Naive thymus-derived CD4-positive, alpha-beta T cell (primary cell): ENCODE measurements at regions of chr1 and their contacts with region 1.

Region 1: DNA sequence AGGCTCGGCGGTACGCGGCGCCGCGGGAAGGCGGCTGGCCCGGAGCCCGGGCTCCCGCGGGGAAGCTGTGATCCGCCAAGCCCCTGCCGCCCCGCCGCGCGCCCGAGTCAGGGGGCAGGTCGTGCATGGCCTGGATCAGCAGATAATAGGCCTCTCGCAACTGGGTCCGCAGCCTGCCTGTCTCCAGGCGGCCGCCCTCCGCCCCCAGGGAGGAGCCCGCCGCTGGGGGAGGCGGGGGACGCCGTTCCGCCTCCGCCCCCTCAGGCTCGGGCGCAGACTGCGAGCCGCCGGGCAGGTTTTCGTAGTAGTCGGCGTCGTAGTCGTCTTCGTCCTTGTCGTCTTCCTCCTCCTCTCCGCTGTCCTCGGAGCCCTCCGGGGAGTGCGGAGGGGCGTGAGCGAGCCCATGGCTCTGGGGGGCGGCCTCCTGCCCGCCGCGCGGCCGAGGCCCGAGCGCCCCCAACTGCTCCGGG is at the start of gene SYDE2:
- DNase-seq: peak; percentile 72 to 91 (median 89)
- ATAC-seq: peak; percentile 90
- H3K4me3 ChIP-seq: peak within 1 kb of the TSS; percentile 84
- H3K4me3 Mint-ChIP-seq: peak within 1 kb of the TSS; percentile 86 to 100 (median 98)
- H3K27ac ChIP-seq: peak within 1 kb of the TSS; percentile 96
- H3K27ac Mint-ChIP-seq: peak within 1 kb of the TSS; percentile 88 to 100 (median 99)
- H3K4me1 ChIP-seq: peaks cover 7 to 11% of the 10 kb centered on the region in 2 donors
- H3K4me1 Mint-ChIP-seq: peaks cover 15 to 61% (median 53%) of the 10 kb centered on the region in 7 donors
- H3K27me3 ChIP-seq: no peaks in the 10 kb centered on the region
- H3K27me3 Mint-ChIP-seq: peaks cover 0 to 46% (median 0%) of the 10 kb centered on the region in 5 donors
- total RNA-seq, gene SYDE2: 1.2 to 9.1 (median 8.4) TPM

Region 2: GRCh38 chr1:84433258-84434080 is 767.4 kb before region 1 on chr1:
- CTCF ChIA-PET with region 1: no interaction called
- POLR2A ChIA-PET with region 1: no interaction called
- intact Hi-C with region 1: loop called in 1 of 2 experiments (anchors 2 kb)
- DNase-seq: peak in 7 of 9 donors; percentile 71 to 85 (median 79)
- ATAC-seq: peak; percentile 92
- H3K4me3 ChIP-seq: peak overlapping the region; percentile 34
- H3K4me3 Mint-ChIP-seq: peak overlapping the region in 9 of 10 donors; percentile 29 to 82 (median 77)
- H3K27ac ChIP-seq: peak overlapping the region; percentile 73
- H3K27ac Mint-ChIP-seq: peak overlapping the region in 2 of 9 donors; percentile 85 to 90
- H3K4me1 ChIP-seq: peaks cover 23 to 41% of the 10 kb centered on the region in 2 donors
- H3K4me1 Mint-ChIP-seq: peaks cover 0 to 12% (median 9%) of the 10 kb centered on the region in 7 donors
- H3K27me3 ChIP-seq: no peaks in the 10 kb centered on the region
- H3K27me3 Mint-ChIP-seq: no peaks in the 10 kb centered on the region

Region 3: DNA sequence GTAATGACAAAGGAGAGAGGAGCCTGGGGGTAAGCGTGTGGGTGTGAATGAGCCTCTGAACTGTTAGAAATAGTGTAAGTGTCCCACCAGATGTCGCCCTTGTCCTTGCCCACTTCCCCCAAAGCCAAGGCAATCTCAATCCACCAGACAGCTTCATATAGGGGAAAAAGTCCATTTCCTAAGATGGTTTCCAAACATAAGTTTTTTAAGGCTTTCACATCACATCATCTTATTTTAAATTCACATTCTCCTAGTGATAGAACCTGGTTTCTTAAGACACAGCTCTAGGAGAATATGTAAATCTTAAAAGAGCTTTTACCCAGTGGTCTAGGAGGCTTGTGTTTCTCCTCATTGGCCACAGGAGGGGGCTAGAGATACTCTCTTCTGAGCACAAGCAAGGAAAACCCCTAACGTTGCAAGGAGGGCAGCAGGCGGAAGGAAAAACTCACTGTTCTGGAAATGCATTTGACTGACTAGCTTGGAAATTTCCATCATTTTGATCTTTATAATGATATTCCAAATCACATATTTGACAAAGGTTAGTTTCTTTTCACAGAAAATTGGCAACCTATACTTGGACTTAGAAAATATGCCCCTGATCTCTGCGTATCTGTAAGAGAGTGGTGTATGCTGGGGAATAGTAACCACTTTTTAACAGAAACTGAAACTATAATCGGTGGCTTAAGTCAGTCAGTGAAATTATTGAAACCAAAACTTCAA is 256.0 kb before region 1 on chr1:
- CTCF ChIA-PET with region 1: interaction called, 9 read pairs
- POLR2A ChIA-PET with region 1: interaction called, 5 read pairs
- intact Hi-C with region 1: loop called (anchors 1 kb)
- DNase-seq: peak; percentile 20 to 94 (median 90)
- ATAC-seq: peak; percentile 98
- H3K4me3 ChIP-seq: peak overlapping the region; percentile 63
- H3K4me3 Mint-ChIP-seq: peak overlapping the region; percentile 72 to 93 (median 86)
- H3K27ac ChIP-seq: peak overlapping the region; percentile 89
- H3K27ac Mint-ChIP-seq: peak overlapping the region; percentile 87 to 98 (median 96)
- H3K4me1 ChIP-seq: peaks cover 5 to 9% of the 10 kb centered on the region in 2 donors
- H3K4me1 Mint-ChIP-seq: peaks cover 7 to 25% (median 12%) of the 10 kb centered on the region in 7 donors
- H3K27me3 ChIP-seq: no peaks in the 10 kb centered on the region
- H3K27me3 Mint-ChIP-seq: peaks cover 0 to 5% (median 0%) of the 10 kb centered on the region in 5 donors

Region 4: GRCh38 chr1:85148524-85149250 is 52.2 kb before region 1 on chr1:
- CTCF ChIA-PET with region 1: no interaction called
- POLR2A ChIA-PET with region 1: no interaction called
- intact Hi-C with region 1: loop called in 1 of 2 experiments (anchors 5 kb)
- DNase-seq: no peak
- ATAC-seq: no peak
- H3K4me3 ChIP-seq: no peak overlapping the region
- H3K4me3 Mint-ChIP-seq: peak overlapping the region in 1 of 10 donors; percentile 27
- H3K27ac ChIP-seq: no peak overlapping the region
- H3K27ac Mint-ChIP-seq: peak overlapping the region in 1 of 9 donors; percentile 47
- H3K4me1 ChIP-seq: no peaks in the 10 kb centered on the region
- H3K4me1 Mint-ChIP-seq: peaks cover 0 to 34% (median 0%) of the 10 kb centered on the region in 7 donors
- H3K27me3 ChIP-seq: no peaks in the 10 kb centered on the region
- H3K27me3 Mint-ChIP-seq: peaks cover 0 to 2% (median 0%) of the 10 kb centered on the region in 5 donors

Region 5: GRCh38 chr1:85240174-85240601 is 39.3 kb after region 1 on chr1:
- CTCF ChIA-PET with region 1: interaction called, 3 read pairs
- POLR2A ChIA-PET with region 1: interaction called, 8 read pairs
- intact Hi-C with region 1: loop called (anchors 1 to 5 kb)
- DNase-seq: peak in 1 of 9 donors; percentile 26
- ATAC-seq: peak; percentile 62
- H3K4me3 ChIP-seq: no peak overlapping the region
- H3K4me3 Mint-ChIP-seq: peak overlapping the region in 6 of 10 donors; percentile 17 to 51 (median 24)
- H3K27ac ChIP-seq: no peak overlapping the region
- H3K27ac Mint-ChIP-seq: peak overlapping the region in 6 of 9 donors; percentile 6 to 89 (median 79)
- H3K4me1 ChIP-seq: peaks cover 0 to 10% of the 10 kb centered on the region in 2 donors
- H3K4me1 Mint-ChIP-seq: peaks cover 1 to 22% (median 17%) of the 10 kb centered on the region in 7 donors
- H3K27me3 ChIP-seq: no peaks in the 10 kb centered on the region
- H3K27me3 Mint-ChIP-seq: peaks cover 0 to 9% (median 0%) of the 10 kb centered on the region in 5 donors

Region 6: GRCh38 chr1:86704458-86704971 is 1503.6 kb after region 1 on chr1 and contains the start of gene SH3GLB1:
- CTCF ChIA-PET with region 1: no interaction called
- POLR2A ChIA-PET with region 1: no interaction called
- intact Hi-C with region 1: loop called in 1 of 2 experiments (anchors 10 kb)
- DNase-seq: peak; percentile 83 to 93 (median 92)
- ATAC-seq: peak; percentile 93
- H3K4me3 ChIP-seq: peak within 1 kb of the TSS; percentile 83
- H3K4me3 Mint-ChIP-seq: peak within 1 kb of the TSS; percentile 95 to 99 (median 97)
- H3K27ac ChIP-seq: peak within 1 kb of the TSS; percentile 86
- H3K27ac Mint-ChIP-seq: peak within 1 kb of the TSS; percentile 96 to 99 (median 97)
- H3K4me1 ChIP-seq: peaks cover 16 to 17% of the 10 kb centered on the region in 2 donors
- H3K4me1 Mint-ChIP-seq: peaks cover 34 to 67% (median 56%) of the 10 kb centered on the region in 7 donors
- H3K27me3 ChIP-seq: no peaks in the 10 kb centered on the region
- H3K27me3 Mint-ChIP-seq: no peaks in the 10 kb centered on the region
- total RNA-seq, gene SH3GLB1: 36.7 to 72.0 (median 49.8) TPM